ENCODE measurements at regions of chr2 and their contacts with region 1.

Region 1: GRCh38 chr2:231482806-231483391 is 18.6 kb upstream of the NCL start:
- DNase-seq: peak; percentile 69 to 87
- ATAC-seq: peak; percentile 98 to 99
- H3K4me3 ChIP-seq: peak overlapping the region; percentile 27
- H3K27ac ChIP-seq: peak overlapping the region; percentile 70 to 96
- H3K4me1 ChIP-seq: peaks cover 4% of the 10 kb centered on the region; the same call in 1 of the 3 replicates
- CTCF ChIP-seq: peak; percentile 86
- EP300 ChIP-seq: no peak
- POLR2A ChIP-seq: no peak
- RAD21 ChIP-seq: peak; percentile 47 to 54

Region 2: GRCh38 chr2:231494669-231495068 is 11.8 kb after region 1 on chr2:
- CTCF ChIA-PET with region 1: interaction called, 10 read pairs
- POLR2A ChIA-PET with region 1: no interaction called
- DNase-seq: no peak
- ATAC-seq: no peak
- H3K4me3 ChIP-seq: no peak overlapping the region
- H3K27ac ChIP-seq: no peak overlapping the region
- H3K4me1 ChIP-seq: no peaks in the 10 kb centered on the region
- CTCF ChIP-seq: no peak
- EP300 ChIP-seq: no peak
- POLR2A ChIP-seq: no peak
- RAD21 ChIP-seq: no peak